MCF 10A (cell line): ENCODE measurements at regions of chr10 and their contacts with region 1.

Region 1: GRCh38 chr10:103396064-103396788 is at the starts of genes ATP5MK and PDCD11:
- DNase-seq: peak; percentile 99
- H3K4me3 Mint-ChIP-seq: peak within 1 kb of the TSS; percentile 96
- H3K27ac Mint-ChIP-seq: peak within 1 kb of the TSS; percentile 95
- H3K4me1 Mint-ChIP-seq: peaks cover 24% of the 10 kb centered on the region
- H3K27me3 Mint-ChIP-seq: no peaks in the 10 kb centered on the region
- CTCF ChIP-seq: no peak
- total RNA-seq, gene ATP5MK: 429 and 559 TPM in 2 replicates
- total RNA-seq, gene PDCD11: 73.2 and 81.7 TPM in 2 replicates

Region 2: DNA sequence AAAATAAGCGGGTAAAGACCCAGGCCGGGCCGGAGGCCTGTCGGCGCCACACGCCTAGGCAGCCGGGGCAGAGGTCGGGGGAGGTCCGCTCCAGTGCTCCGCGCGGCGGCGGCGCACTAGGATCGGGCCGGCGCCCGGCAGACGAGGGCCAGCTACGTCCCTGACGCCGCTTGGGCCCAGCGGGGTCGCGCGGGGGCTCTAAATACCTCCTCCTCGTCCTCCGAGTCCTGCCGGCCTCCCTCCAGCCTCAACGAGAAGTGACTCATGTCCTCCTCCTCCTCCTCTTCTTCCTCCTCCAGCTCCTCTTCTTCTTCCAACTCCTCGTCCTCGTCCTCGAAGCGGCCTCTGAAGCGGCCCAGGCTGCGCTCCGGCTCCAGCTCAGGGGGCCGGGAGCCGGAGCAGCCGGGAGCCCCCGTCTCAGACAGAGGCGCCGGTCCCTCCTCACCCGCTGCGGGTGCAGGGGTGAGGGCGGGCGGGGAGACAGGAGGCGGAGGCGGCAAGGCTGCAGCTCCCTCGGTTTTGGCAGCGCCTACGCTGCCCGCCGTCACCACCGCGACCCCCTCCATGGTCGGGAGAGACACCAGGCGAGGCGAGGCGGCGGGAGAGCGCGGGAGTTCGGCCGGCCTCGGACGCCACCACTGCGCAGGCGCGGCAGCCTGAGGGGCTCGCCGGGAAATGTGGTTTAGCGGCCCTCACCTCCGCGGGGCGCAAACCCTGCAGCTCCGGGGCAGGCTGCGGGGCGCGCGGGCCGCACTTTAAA is 45.5 kb before region 1 on chr10 and contains the start of gene PCGF6:
- CTCF ChIA-PET with region 1: no interaction called
- POLR2A ChIA-PET with region 1: interaction called, 6 read pairs
- intact Hi-C with region 1: loop called (anchors 5 kb)
- DNase-seq: peak; percentile 78
- H3K4me3 Mint-ChIP-seq: peak within 1 kb of the TSS; percentile 89
- H3K27ac Mint-ChIP-seq: peak within 1 kb of the TSS; percentile 79
- H3K4me1 Mint-ChIP-seq: no peaks in the 10 kb centered on the region
- H3K27me3 Mint-ChIP-seq: no peaks in the 10 kb centered on the region
- CTCF ChIP-seq: no peak
- total RNA-seq, gene PCGF6: 7.2 and 7.3 TPM in 2 replicates

Region 3: GRCh38 chr10:103373544-103373943 is 22.7 kb before region 1 on chr10:
- CTCF ChIA-PET with region 1: interaction called, 4 read pairs
- POLR2A ChIA-PET with region 1: interaction called, 62 read pairs
- intact Hi-C with region 1: loop called (anchors 2 kb)
- DNase-seq: no peak
- H3K4me3 Mint-ChIP-seq: no peak overlapping the region
- H3K27ac Mint-ChIP-seq: no peak overlapping the region
- H3K4me1 Mint-ChIP-seq: no peaks in the 10 kb centered on the region
- H3K27me3 Mint-ChIP-seq: no peaks in the 10 kb centered on the region
- CTCF ChIP-seq: no peak

Region 4: DNA sequence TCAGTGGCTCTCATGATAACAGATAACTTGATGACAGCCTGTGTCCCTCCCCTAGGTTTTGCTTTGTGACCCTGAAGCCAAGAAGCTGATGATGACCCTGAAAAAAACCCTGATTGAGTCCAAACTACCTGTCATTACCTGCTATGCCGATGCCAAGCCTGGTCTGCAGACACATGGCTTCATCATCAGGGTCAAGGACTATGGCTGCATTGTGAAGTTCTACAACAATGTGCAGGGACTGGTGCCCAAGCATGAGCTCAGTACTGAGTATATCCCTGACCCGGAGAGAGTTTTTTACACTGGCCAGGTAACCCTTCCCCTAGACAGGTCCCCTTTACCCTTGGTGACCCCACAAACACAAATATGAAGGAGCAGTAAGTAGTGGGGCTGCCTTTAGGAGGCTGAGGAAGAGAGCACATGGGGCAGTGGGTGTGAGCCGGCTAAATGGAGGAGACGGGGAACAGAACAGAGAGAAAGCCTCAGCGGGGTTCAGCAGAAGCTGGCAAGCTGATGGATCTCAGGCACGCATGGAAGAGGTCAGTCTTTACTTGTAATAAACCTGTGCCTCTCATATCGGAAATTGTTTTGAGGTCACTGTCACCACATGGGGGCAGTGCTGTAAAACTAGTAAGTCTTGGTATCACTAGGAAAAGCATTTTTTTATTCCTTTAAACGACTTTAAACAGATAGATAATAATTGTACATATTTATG is 20.4 kb after region 1 on chr10:
- CTCF ChIA-PET with region 1: interaction called, 18 read pairs
- POLR2A ChIA-PET with region 1: interaction called, 6 read pairs
- intact Hi-C with region 1: no loop called
- DNase-seq: peak; percentile 68
- H3K4me3 Mint-ChIP-seq: no peak overlapping the region
- H3K27ac Mint-ChIP-seq: no peak overlapping the region
- H3K4me1 Mint-ChIP-seq: no peaks in the 10 kb centered on the region
- H3K27me3 Mint-ChIP-seq: no peaks in the 10 kb centered on the region
- CTCF ChIP-seq: peak; percentile 37